Ascending aorta (tissue), 2 donors: ENCODE measurements at regions of chr13 and their contacts with region 1.

Region 1: DNA sequence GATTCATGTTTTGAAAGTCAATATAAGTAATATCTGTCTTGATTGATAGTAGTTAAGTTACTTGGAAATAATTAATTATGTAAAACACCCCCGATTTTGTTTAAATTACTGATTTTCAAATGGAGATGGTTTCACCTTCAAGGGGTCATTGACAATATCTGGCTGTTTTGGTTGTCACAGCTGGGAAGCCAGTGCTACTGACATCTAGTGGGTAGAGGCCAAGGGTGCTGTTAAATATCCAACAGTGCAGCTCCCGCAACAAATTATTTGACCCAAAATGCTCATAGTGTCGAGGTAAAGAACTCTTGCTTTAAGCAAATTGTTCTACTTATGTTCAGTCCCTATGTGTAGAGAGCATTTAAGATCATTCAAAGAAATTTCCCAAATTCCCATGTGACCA is 50.6 kb upstream of the PCDH20 start:
- DNase-seq: no peak
- H3K4me3 ChIP-seq: no peak overlapping the region
- H3K27ac ChIP-seq: no peak overlapping the region
- H3K4me1 ChIP-seq: no peaks in the 10 kb centered on the region
- H3K27me3 ChIP-seq: no peaks in the 10 kb centered on the region
- CTCF ChIP-seq: peak in 1 of 3 experiments; percentile 9

Region 2: DNA sequence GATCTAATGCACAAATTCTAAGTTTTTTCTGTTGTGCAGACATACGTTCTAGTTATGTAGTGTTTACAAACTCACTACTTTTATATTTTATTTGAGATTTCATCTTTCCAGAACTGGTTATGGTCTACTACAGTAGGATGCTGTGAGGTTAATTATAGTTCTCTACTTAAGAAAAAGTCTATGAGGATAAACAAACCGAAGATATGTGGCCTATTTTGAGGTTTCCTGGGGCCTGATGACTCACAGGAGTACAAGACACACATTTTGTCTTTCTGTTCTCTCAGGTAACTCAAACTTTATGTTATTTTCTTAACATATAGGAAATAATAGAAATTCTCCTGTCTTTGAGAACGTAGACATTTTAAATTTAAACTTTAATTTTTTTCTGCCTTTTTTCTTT is 95.8 kb before region 1 on chr13:
- intact Hi-C with region 1: loop called (anchors 10 kb)
- DNase-seq: no peak
- H3K4me3 ChIP-seq: no peak overlapping the region
- H3K27ac ChIP-seq: no peak overlapping the region
- H3K4me1 ChIP-seq: no peaks in the 10 kb centered on the region
- H3K27me3 ChIP-seq: no peaks in the 10 kb centered on the region
- CTCF ChIP-seq: no peak

Region 3: GRCh38 chr13:61410669-61411297 is 55.5 kb before region 1 on chr13:
- intact Hi-C with region 1: no loop called
- DNase-seq: no peak
- H3K4me3 ChIP-seq: no peak overlapping the region
- H3K27ac ChIP-seq: no peak overlapping the region
- H3K4me1 ChIP-seq: peaks cover 0 to 2% of the 10 kb centered on the region in 2 donors
- H3K27me3 ChIP-seq: no peaks in the 10 kb centered on the region
- CTCF ChIP-seq: peak in 2 of 3 experiments; percentile 33 to 46

Region 4: GRCh38 chr13:62022369-62022768 is 556.1 kb after region 1 on chr13:
- intact Hi-C with region 1: no loop called
- DNase-seq: no peak
- H3K4me3 ChIP-seq: no peak overlapping the region
- H3K27ac ChIP-seq: no peak overlapping the region
- H3K4me1 ChIP-seq: no peaks in the 10 kb centered on the region
- H3K27me3 ChIP-seq: no peaks in the 10 kb centered on the region
- CTCF ChIP-seq: no peak

Region 5: GRCh38 chr13:62234780-62235440 is 768.6 kb after region 1 on chr13:
- intact Hi-C with region 1: no loop called
- DNase-seq: no peak
- H3K4me3 ChIP-seq: no peak overlapping the region
- H3K27ac ChIP-seq: no peak overlapping the region
- H3K4me1 ChIP-seq: no peaks in the 10 kb centered on the region
- H3K27me3 ChIP-seq: no peaks in the 10 kb centered on the region
- CTCF ChIP-seq: no peak